ENCODE measurements at regions of chr16 and their contacts with region 1.

Region 1: DNA sequence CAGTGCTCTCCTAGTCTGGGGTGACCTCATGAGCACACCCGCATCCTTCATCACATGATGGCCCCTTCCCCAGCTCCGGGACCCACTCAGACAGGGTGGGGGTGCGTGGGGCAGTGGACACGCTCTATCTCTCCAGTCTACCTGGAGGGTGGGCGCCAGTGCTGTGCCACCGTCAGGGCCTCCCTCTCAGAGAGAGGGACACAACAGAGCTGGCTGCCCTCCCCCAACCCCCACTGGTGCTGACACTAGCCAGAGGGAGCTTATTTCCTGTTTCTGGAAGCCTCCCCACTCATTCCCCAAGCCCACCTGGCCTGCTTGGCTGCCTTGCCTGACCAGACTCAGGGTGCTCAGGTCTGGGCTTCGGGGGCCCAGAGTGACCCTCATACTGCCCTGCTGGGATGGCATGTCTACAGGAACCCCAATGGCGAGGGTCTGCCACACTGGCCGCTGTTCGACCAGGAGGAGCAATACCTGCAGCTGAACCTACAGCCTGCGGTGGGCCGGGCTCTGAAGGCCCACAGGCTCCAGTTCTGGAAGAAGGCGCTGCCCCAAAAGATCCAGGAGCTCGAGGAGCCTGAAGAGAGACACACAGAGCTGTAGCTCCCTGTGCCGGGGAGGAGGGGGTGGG is 8.2 kb downstream of the CES2 start:
- DNase-seq: no peak
- CTCF ChIP-seq: no peak

Region 2: DNA sequence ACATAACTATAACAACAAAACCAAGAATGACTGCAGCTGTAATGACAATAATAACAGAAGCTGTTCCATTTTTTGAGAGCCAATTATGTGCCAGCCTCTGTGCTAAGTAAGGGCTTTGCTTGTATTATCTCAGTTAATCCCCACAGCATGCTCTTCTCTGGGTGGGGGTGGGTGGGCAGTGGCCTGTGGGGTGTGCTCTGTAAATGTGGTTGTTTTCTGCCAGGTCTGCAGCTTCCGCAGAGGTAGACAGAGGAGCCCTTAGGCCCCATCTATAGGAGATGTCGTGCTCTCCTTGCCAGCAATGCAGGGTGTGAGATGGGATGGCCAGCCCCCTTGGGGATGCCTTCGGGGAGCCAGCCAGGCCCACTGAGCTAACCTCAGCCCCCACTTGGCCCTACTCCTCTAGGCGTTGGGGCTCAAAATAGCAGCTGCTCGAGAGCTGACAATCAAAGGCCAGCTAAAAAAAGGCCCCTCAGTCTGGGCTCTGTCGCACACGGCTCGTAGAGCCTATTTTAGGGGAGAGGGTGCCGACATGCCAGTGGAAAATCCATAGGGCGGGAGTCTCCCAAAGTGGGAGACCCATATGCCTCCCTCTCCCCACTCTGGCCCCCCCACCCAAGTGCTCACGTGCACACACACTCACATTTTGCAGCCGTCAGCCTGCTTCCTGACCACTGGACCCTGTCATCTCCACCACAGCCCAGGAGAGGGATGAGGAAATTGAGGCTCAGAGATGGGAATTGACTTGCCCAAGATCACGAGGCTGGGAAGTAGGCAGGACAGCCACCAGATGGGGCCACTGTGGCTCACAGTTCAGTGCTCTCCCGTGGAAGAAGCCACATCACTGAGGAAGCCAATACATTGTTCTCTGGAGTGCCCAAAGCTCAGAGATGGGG is 40.6 kb before region 1 on chr16:
- CTCF ChIA-PET with region 1: no interaction called
- POLR2A ChIA-PET with region 1: no interaction called
- DNase-seq: no peak
- CTCF ChIP-seq: no peak

Region 3: GRCh38 chr16:66954097-66954659 is 10.6 kb after region 1 on chr16:
- CTCF ChIA-PET with region 1: interaction called, 19 read pairs
- POLR2A ChIA-PET with region 1: no interaction called
- DNase-seq: peak; percentile 79
- CTCF ChIP-seq: peak; percentile 84

Region 4: DNA sequence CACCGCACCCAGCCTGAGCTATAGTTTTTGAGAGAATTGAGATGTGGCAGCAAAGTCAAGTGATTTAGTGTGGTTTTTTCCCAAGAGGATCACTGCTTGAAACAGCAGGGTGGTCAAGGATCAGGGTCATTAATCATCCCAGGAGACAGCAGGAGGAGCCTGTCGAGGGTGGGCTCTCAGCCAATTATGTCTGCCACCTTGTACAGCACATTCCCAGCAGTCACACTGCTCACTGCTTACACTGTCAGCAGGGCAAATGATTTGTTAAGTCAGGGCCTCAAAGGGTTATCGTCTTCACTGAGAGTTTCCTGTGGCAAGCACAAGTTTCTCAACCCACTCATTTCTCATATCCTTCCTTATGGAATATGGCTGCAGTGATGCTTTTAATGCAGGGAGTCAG is 194.1 kb after region 1 on chr16:
- CTCF ChIA-PET with region 1: no interaction called
- POLR2A ChIA-PET with region 1: no interaction called
- DNase-seq: no peak
- CTCF ChIP-seq: no peak